Activated naive CD4-positive, alpha-beta T cell treated with anti-CD3 and anti-CD28 coated beads, Interleukin-2, amount 10 ng/mL, durations not matched to agents 7 days and 5 days (primary cell): ENCODE measurements at regions of chr2 and their contacts with region 1.

Region 1: DNA sequence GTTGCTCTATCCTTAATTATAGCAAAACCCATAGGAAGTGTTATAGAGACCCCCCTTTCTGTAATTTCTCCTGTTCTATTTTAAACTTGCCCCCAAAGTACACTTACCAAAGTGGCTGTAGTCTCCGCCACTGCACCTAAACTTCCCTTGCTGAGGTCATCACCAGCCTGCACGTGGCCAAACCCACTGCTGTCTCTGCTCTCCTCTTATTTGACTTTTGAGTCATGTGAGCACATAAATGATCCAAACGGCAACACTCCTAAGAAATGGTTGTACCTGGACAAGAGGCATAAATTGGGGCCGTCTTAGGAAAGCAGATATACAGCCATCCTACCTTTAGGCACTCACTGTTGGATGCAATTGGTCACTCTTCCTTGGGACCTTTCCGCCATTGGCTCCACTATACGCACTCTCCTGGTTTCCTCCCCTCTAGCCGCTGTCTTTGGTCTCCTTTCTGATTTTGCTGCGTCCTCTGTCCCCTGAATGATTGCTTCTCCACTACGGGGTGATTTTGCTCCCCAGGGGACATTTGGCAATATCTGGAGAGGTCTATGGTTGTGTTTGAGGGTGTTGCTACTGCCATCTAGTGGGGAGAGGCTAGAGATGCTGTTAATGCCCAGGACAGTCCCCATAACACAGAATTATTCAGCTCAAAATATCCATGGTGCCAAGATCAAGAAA is 19.2 kb upstream of the IL36G start:
- DNase-seq: peak; percentile 58
- H3K4me3 Mint-ChIP-seq: no peak overlapping the region
- H3K27ac Mint-ChIP-seq: no peak overlapping the region
- H3K4me1 Mint-ChIP-seq: no peaks in the 10 kb centered on the region
- H3K27me3 Mint-ChIP-seq: no peaks in the 10 kb centered on the region

Region 2: DNA sequence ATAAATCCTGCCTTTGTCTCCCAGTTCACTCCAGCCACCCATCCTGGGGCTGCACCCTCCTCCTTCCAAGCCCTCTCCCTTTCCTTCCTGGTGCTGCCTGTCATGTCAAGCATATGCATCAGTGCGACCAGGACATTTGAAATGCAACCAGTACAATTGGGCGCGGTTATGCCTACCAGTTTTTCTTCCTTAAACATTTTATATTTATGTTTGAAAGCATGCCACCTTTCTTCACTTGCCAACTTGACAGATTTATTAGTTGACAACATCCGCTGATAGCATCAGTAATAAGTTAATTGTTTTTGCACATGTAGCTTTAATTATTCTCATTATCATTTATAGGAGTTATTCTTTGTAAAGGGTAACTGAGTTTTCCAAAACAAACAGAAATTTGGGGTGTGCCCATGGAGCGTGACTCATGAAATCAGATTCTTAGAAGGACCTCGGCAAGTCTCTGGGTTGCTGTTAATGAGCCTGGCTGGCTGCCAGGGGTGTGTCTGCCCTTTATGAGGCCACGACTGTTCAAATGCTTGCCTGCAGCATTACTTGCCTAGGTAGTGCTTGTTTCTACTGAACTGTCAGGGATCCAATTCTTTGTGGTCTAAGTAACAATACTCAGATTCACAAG is 89.2 kb before region 1 on chr2:
- CTCF ChIA-PET with region 1: no interaction called
- DNase-seq: peak; percentile 26
- H3K4me3 Mint-ChIP-seq: no peak overlapping the region
- H3K27ac Mint-ChIP-seq: no peak overlapping the region
- H3K4me1 Mint-ChIP-seq: peaks cover 3% of the 10 kb centered on the region
- H3K27me3 Mint-ChIP-seq: peaks cover 44% of the 10 kb centered on the region

Region 3: GRCh38 chr2:112972423-112973086 is 14.0 kb after region 1 on chr2:
- CTCF ChIA-PET with region 1: interaction called, 16 read pairs
- DNase-seq: no peak
- H3K4me3 Mint-ChIP-seq: no peak overlapping the region
- H3K27ac Mint-ChIP-seq: no peak overlapping the region
- H3K4me1 Mint-ChIP-seq: peaks cover 8% of the 10 kb centered on the region
- H3K27me3 Mint-ChIP-seq: peaks cover 29% of the 10 kb centered on the region

Region 4: GRCh38 chr2:112977559-112978056 is 19.0 kb after region 1 on chr2 and contains the start of gene IL36G:
- CTCF ChIA-PET with region 1: interaction called, 16 read pairs
- DNase-seq: no peak
- H3K4me3 Mint-ChIP-seq: no peak within 1 kb of the TSS
- H3K27ac Mint-ChIP-seq: no peak within 1 kb of the TSS
- H3K4me1 Mint-ChIP-seq: peaks cover 14% of the 10 kb centered on the region
- H3K27me3 Mint-ChIP-seq: peaks cover 27% of the 10 kb centered on the region

Region 5: GRCh38 chr2:113068718-113069435 is 110.3 kb after region 1 on chr2:
- CTCF ChIA-PET with region 1: no interaction called
- DNase-seq: no peak
- H3K4me3 Mint-ChIP-seq: no peak overlapping the region
- H3K27ac Mint-ChIP-seq: no peak overlapping the region
- H3K4me1 Mint-ChIP-seq: no peaks in the 10 kb centered on the region
- H3K27me3 Mint-ChIP-seq: peaks cover 22% of the 10 kb centered on the region

Region 6: GRCh38 chr2:113376913-113377445 is 418.4 kb after region 1 on chr2:
- CTCF ChIA-PET with region 1: no interaction called
- DNase-seq: no peak
- H3K4me3 Mint-ChIP-seq: no peak overlapping the region
- H3K27ac Mint-ChIP-seq: no peak overlapping the region
- H3K4me1 Mint-ChIP-seq: peaks cover 4% of the 10 kb centered on the region
- H3K27me3 Mint-ChIP-seq: peaks cover 18% of the 10 kb centered on the region